ENCODE measurements at regions of chr6 and their contacts with region 1.

Region 1: DNA sequence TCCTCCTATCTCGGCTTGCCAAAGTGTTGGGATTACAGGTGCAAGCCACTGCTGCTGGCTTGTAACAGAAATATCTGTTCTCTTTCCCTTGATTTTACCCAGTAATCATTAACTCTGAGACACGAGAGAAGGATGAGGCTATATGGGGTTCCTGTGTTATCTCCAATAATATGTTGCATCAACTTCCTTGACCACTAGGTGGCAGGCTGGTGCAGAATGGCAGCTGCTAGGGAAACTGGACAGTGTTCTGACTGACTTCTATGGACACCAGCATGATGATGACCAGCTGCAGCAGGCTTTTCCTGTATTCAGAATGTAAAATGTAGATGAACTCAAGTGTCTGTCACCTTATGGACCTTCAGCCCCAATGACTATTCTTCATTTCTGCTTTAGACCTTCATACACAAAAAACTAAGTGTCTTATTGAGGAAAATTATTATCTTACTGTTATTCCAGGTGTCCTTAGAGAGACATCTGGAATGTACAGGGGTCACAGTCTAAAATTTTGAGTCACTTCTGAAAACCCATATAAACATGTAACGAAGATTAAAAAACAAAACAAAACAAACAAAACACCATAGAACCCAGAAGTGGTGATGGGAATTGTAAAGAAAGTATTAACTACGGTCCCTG is 20.4 kb upstream of the CD109 start:
- DNase-seq: peak; percentile 81
- ATAC-seq: peak; percentile 94
- H3K4me3 Mint-ChIP-seq: no peak overlapping the region
- H3K27ac Mint-ChIP-seq: no peak overlapping the region
- H3K4me1 Mint-ChIP-seq: peaks cover 3% of the 10 kb centered on the region
- H3K27me3 Mint-ChIP-seq: peaks cover 20% of the 10 kb centered on the region

Region 2: DNA sequence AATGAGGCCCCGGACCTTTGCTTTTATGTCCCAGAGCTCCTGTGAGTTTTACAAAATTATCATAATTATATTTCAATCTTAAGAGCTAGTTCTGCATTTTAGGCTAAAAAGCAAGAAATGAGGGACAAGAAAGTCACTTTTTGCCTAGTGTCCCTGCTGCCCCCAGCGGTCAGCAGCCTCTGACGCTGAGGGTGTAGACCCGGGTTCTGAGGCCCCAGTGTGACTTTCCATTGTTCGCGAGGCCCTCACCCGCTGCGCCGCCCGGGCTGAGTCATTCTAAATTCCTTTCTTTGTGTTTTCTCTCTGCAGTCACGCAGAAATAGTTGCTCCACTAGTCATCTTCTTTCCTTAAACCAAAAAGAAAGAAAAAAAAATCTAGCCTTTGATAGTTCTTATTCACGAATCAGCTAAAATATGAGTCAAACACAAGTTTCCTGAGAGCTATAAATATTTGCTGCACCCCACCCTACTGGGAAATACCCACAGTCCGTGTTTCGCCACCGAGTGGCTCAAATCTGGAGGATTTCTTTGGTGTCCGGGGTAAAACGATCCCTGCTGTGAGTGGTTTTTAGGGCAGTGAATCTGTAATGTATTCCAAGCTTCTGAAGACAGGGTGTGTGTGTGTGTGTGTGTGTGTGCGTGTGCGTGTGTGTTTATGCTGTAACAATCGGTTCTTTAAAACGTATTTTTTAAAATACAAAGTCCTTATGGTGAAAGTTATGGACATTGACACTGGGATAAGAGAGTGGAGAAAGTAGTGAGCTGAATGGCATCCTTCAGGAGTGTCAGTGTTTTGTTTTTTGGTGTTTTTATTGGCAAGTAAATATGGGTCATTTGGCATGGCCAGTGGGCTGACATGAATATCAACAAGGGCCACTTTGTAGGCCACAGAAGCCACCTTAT is 95.1 kb before region 1 on chr6:
- CTCF ChIA-PET with region 1: no interaction called
- POLR2A ChIA-PET with region 1: no interaction called
- DNase-seq: peak; percentile 63
- ATAC-seq: peak; percentile 82
- H3K4me3 Mint-ChIP-seq: peak overlapping the region; percentile 57
- H3K27ac Mint-ChIP-seq: peak overlapping the region; percentile 89
- H3K4me1 Mint-ChIP-seq: peaks cover 25% of the 10 kb centered on the region
- H3K27me3 Mint-ChIP-seq: no peaks in the 10 kb centered on the region

Region 3: GRCh38 chr6:73653571-73654424 is 21.8 kb before region 1 on chr6 and contains the start of gene SLC17A5:
- CTCF ChIA-PET with region 1: interaction called, 10 read pairs
- POLR2A ChIA-PET with region 1: interaction called, 3 read pairs
- DNase-seq: peak; percentile 93
- ATAC-seq: peak; percentile 91
- H3K4me3 Mint-ChIP-seq: peak within 1 kb of the TSS; percentile 99
- H3K27ac Mint-ChIP-seq: peak within 1 kb of the TSS; percentile 97
- H3K4me1 Mint-ChIP-seq: peaks cover 22% of the 10 kb centered on the region
- H3K27me3 Mint-ChIP-seq: no peaks in the 10 kb centered on the region
- total RNA-seq, gene SLC17A5: 5.0 to 5.7 TPM

Region 4: GRCh38 chr6:73691512-73691911 is 15.9 kb after region 1 on chr6:
- CTCF ChIA-PET with region 1: interaction called, 18 read pairs
- POLR2A ChIA-PET with region 1: no interaction called
- DNase-seq: no peak
- ATAC-seq: no peak
- H3K4me3 Mint-ChIP-seq: no peak overlapping the region
- H3K27ac Mint-ChIP-seq: no peak overlapping the region
- H3K4me1 Mint-ChIP-seq: peaks cover 14% of the 10 kb centered on the region
- H3K27me3 Mint-ChIP-seq: peaks cover 15% of the 10 kb centered on the region

Region 5: DNA sequence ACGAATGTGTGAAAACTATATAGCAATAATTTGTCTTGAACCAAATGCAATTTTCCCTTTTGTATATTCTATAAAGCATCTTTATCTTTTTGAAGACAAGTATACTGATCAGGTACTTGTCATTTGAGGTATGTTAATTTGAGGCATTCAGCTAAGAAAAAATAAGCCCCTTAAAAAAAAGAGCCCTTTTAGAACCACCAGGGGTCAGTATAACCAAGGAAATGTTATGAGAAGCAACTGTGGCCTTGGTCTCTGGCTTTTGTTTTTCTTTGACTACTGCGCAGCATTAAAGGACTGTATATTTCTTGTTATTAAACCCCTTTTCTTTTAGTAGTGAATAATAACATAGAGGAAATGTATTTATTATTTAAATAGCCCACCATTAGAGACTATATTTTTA is 63.5 kb after region 1 on chr6:
- CTCF ChIA-PET with region 1: interaction called, 105 read pairs
- POLR2A ChIA-PET with region 1: no interaction called
- DNase-seq: no peak
- ATAC-seq: peak; percentile 73
- H3K4me3 Mint-ChIP-seq: no peak overlapping the region
- H3K27ac Mint-ChIP-seq: no peak overlapping the region
- H3K4me1 Mint-ChIP-seq: peaks cover 2% of the 10 kb centered on the region
- H3K27me3 Mint-ChIP-seq: no peaks in the 10 kb centered on the region